ENCODE measurements at regions of chr2 and their contacts with region 1.

Region 1: GRCh38 chr2:68467077-68467960 is at the starts of genes APLF and FBXO48:
- DNase-seq: peak; percentile 94 to 100 (median 96)

Region 2: DNA sequence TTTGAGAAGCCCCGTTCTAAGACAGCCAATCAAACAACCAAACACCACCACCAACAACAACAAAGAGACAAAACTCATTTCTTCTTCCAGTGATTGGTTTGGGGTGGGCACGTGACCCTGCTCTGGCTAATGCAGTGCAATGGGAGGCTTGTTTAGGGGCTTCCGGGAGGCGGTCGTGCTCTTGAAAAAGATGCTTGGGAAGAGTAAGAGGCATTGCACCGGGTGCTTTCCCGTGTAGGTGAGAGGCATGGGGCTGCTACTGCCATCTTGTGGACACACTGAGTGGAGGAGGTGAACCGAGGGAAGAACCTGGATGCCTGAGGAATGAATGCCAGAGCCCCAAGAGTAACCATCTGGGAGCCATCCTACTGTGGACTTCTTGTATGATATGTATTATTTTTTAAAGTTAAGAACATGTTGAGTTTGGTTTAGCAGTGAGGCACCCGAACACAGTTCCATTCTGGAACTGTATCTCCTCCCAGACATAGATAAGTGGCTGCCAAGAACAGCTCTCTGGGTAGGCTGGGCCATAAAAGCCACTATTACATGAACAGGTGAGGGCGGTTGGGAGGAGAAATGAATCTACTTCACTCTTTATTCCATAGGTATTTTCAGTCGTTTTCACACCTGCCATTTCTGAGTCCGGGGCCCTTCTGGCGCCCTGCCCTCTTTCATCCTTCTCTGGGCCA is 248.2 kb after region 1 on chr2:
- intact Hi-C with region 1: loop called (anchors 1 kb)
- DNase-seq: peak in 3 of 10 donors; percentile 24 to 87 (median 28)

Region 3: GRCh38 chr2:68925295-68925896 is 458.1 kb after region 1 on chr2:
- intact Hi-C with region 1: loop called (anchors 10 kb)
- DNase-seq: peak in 1 of 10 donors; percentile 23

Measured in posterior cingulate gyrus (tissue), 11 donors.